GM10248 (cell line): ENCODE measurements at regions of chr19 and their contacts with region 1.

Region 1: GRCh38 chr19:29610563-29611271 is 4.6 kb downstream of the POP4 start:
- DNase-seq: peak; percentile 90
- CTCF ChIP-seq: peak; percentile 93

Region 2: GRCh38 chr19:29564574-29565005 is 46.1 kb before region 1 on chr19:
- CTCF ChIA-PET with region 1: no interaction called
- POLR2A ChIA-PET with region 1: no interaction called
- DNase-seq: no peak
- CTCF ChIP-seq: no peak

Region 3: GRCh38 chr19:29596885-29597525 is 13.7 kb before region 1 on chr19:
- CTCF ChIA-PET with region 1: interaction called, 37 read pairs
- POLR2A ChIA-PET with region 1: no interaction called
- DNase-seq: no peak
- CTCF ChIP-seq: peak; percentile 58

Region 4: DNA sequence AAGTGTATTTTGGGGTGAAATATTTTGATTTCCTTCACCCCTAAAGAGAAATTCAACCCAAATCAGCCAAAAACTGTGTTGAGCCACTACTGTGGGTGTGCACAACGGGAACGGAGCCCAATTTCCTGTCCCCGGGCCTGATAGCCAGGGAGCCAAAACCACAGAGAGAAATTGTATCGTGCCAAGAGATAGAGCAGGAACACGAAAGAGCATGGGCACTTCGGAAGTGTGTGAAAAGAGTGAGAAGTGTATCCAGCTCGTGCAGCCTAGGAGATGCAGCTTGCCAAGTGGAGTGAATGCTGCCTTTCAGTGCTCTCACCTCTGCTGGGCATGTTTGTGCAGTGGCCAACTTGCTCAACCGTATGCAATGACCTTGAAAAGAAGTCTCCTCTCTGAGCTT is 35.2 kb after region 1 on chr19:
- CTCF ChIA-PET with region 1: interaction called, 14 read pairs
- POLR2A ChIA-PET with region 1: no interaction called
- DNase-seq: no peak
- CTCF ChIP-seq: no peak

Region 5: GRCh38 chr19:29680447-29680846 is 69.7 kb after region 1 on chr19:
- CTCF ChIA-PET with region 1: interaction called, 18 read pairs
- POLR2A ChIA-PET with region 1: no interaction called
- DNase-seq: peak; percentile 63
- CTCF ChIP-seq: no peak

Region 6: DNA sequence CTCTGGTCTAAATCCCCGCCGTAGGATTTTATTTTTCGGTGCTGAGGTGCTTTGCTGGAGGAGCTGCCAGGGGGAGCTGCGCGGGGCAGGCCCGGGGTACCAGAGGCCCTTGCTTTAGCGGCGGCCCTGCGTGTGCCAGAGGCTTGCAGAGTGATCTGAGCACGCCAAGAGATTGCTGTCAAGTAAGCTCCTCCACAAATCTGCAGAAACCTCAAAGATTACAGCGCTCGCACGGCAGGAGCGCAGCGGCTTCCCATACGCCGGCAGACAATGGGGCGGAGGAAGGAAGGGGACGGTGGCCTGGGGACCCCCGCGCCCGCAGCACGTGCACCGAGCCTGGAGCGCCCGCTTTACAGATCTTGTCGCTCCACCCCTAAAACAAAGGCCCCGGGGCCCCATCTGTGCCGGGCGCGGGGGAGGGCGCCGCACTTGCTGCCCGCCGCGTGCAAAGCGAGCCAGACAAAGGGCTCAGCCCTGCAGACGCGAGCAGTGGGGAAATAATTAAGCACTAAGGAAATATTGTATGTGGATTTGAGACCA is 113.5 kb after region 1 on chr19:
- CTCF ChIA-PET with region 1: interaction called, 17 read pairs
- POLR2A ChIA-PET with region 1: no interaction called
- DNase-seq: no peak
- CTCF ChIP-seq: no peak

Region 7: DNA sequence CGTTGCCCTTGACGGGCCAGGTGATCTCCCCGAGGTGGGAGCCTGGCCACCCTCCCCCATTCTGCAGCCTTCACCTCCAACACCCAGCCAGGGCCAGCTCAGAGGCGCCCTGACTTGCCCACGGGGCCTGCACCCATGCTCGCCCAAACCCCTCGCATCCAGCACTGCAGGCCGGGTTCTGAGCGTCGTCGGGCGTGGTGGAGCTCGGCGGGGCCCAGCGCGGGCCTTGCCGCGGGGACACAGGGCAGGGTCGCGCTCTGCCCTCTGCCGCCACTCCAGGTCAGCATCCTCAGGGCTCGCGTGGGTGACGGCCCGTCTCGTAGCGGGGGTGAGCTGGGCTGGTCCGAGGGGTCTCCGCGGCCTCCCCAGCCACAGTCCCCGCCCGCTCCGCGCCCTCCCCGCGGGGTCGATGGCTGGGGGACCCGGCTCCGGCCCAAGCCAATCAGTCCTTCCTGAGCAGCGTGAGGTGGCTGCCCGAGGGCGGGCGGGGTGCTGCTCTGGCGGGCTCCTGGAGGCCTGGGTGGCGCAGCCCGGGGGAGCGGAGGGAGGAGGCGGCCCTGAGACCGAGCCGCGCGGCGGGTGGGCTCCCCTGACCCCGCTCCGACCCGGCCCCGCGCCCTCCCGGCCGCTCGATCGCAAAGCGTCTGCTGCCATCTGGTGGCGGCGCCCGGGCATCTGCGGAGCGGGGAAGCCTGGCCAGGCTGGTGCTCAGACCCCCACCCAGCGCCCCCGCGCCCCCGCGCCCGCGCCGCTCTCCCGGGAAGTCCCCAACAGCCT is 262.5 kb after region 1 on chr19:
- CTCF ChIA-PET with region 1: interaction called, 12 read pairs
- POLR2A ChIA-PET with region 1: no interaction called
- DNase-seq: peak; percentile 85
- CTCF ChIP-seq: peak; percentile 80